Psoas muscle (tissue), 8 donors: ENCODE measurements at regions of chr11 and their contacts with region 1.

Region 1: DNA sequence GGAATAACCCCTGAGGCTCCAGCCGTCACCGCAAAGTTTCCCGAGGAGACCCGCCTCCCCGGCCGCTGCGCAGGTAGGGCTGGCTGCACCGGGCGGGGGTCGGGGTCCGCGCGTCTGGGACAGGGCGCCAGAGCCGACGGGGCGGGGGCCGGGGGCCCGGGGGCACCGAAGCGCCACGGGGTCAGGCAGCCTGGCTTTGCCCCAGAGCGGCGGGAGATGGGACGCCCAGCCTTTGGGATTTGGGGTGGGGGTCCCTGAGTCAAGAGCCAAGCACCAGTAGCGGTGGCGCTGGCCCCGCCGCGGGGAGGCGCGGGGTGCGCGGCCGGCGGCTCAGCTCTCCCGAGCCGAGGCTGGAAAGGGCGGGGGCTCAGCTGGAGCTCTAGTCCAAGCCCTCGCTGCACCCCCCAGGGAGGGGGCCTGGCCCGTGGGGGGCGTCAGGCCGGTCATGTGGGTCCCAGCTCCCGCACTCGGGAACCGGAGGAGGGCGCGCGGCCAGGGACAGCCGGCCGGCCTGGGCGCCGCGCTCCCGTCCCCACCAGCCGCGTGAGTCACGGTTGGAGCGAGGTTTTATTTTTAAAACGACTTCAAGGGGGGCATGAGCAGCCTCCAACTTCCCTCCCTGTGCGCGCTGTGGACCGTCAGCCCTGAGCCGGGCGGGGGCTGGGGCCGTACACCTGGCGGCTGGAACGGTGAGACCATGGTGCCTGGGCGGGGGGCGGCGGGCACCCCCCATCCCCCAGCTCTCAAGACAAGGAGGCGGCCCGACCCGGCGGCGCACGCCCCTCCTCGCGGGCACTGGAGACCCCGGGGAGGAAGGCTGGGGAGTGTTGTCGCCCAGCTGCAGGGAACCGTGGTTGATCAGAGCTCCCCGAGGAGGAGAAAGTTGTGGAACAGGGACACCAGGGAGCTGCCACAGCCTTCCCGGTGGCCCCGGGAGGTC is 626 bp downstream of the FLRT1 start:
- DNase-seq: peak; percentile 68 to 85
- ATAC-seq: peak; percentile 80 to 94 (median 89)
- H3K4me3 ChIP-seq: peak overlapping the region; percentile 74
- H3K27ac ChIP-seq: peak overlapping the region; percentile 51
- H3K4me1 ChIP-seq: peaks cover 24% of the 10 kb centered on the region
- H3K27me3 ChIP-seq: no peaks in the 10 kb centered on the region
- CTCF ChIP-seq: no peak

Region 2: GRCh38 chr11:64100360-64100759 is 64.0 kb after region 1 on chr11:
- intact Hi-C with region 1: loop called in 1 of 2 experiments (anchors 2 kb)
- DNase-seq: no peak
- ATAC-seq: no peak
- H3K4me3 ChIP-seq: no peak overlapping the region
- H3K27ac ChIP-seq: no peak overlapping the region
- H3K4me1 ChIP-seq: peaks cover 61% of the 10 kb centered on the region
- H3K27me3 ChIP-seq: no peaks in the 10 kb centered on the region
- CTCF ChIP-seq: no peak